ENCODE measurements at regions of chr1 and their contacts with region 1.

Region 1: DNA sequence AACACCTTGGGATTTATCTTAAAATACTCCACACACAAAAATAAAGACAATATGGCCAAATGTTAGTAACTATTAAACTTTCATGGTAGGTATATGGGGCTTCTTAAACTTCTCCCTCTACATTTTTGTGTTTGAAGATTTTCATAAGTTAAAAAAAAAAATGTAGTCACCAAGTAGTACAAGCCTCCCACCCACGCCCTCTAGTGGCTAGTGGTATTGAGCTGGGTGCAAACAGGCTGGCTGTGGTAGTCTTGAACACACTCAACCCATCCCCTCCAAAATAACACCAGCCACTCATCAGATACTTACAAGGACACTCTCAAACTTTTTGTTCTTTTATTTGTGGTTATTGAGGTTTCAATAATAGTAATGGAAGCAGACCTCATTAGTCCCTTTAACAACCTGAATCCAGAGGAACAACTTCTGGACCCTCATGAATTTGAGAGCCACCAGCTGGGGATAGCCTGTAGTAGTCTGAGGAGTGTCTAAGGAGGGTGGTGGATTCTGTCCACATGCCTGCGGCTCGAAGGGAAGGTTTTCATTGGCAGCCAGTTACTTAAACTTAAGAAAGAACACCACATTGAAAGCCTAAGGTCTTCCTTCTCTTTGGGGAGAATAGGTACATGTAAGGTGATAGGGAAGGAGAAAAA is 15.6 kb downstream of the RD3 start:
- DNase-seq: peak; percentile 53 to 87
- ATAC-seq: peak; percentile 87 to 93 (median 89)
- H3K4me3 ChIP-seq: no peak overlapping the region
- H3K4me3 Mint-ChIP-seq: no peak overlapping the region
- H3K27ac ChIP-seq: no peak overlapping the region
- H3K27ac Mint-ChIP-seq: no peak overlapping the region
- H3K4me1 ChIP-seq: no peaks in the 10 kb centered on the region
- H3K4me1 Mint-ChIP-seq: no peaks in the 10 kb centered on the region
- H3K27me3 ChIP-seq: no peaks in the 10 kb centered on the region
- H3K27me3 Mint-ChIP-seq: peaks cover 17 to 23% of the 10 kb centered on the region in 2 donors
- CTCF ChIP-seq: peak; percentile 90

Region 2: GRCh38 chr1:210400043-210400840 is 1076.1 kb before region 1 on chr1:
- intact Hi-C with region 1: loop called (anchors 10 kb)
- DNase-seq: peak in 1 of 2 donors; percentile 64
- ATAC-seq: peak; percentile 36 to 83 (median 64)
- H3K4me3 ChIP-seq: no peak overlapping the region
- H3K4me3 Mint-ChIP-seq: no peak overlapping the region
- H3K27ac ChIP-seq: no peak overlapping the region
- H3K27ac Mint-ChIP-seq: peak overlapping the region in 1 of 2 donors; percentile 21
- H3K4me1 ChIP-seq: no peaks in the 10 kb centered on the region
- H3K4me1 Mint-ChIP-seq: peaks cover 5% of the 10 kb centered on the region in 2 donors
- H3K27me3 ChIP-seq: no peaks in the 10 kb centered on the region
- H3K27me3 Mint-ChIP-seq: no peaks in the 10 kb centered on the region
- CTCF ChIP-seq: peak; percentile 32

Region 3: DNA sequence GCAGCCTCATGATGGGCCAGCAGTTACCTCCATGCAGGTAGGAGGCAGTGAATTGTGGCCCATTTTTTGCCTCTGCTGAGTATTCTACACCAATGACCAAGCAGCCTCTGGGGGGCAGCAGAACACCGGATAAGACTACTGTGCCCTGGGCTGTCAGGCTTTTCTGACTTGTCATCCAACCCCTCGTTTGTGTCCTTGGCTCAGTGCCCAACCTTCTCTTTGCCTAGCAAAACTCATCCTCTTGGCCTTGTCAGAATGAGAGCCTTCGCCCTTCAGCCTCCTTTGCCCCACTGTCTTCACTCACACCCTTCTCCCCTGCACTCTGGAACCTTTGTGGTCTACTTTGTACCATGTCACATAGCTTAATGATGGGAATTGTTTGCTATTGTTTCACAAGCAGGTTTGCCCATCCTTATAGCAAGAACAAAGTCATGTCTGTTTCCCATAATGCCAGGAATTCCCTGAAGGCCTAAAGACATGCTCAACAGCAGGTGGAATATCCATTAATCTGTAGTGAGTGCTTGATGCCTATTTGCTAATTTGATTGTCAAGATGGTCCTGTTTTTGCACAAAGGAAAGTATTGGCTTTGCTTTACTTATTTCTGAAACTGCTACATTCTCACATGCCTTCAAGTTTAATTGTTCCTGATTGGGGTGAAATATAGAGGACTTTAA is 891.7 kb before region 1 on chr1:
- intact Hi-C with region 1: loop called (anchors 2 kb)
- DNase-seq: peak; percentile 23 to 72
- ATAC-seq: peak; percentile 34 to 81 (median 60)
- H3K4me3 ChIP-seq: no peak overlapping the region
- H3K4me3 Mint-ChIP-seq: no peak overlapping the region
- H3K27ac ChIP-seq: no peak overlapping the region
- H3K27ac Mint-ChIP-seq: no peak overlapping the region
- H3K4me1 ChIP-seq: no peaks in the 10 kb centered on the region
- H3K4me1 Mint-ChIP-seq: peaks cover 0 to 12% of the 10 kb centered on the region in 2 donors
- H3K27me3 ChIP-seq: no peaks in the 10 kb centered on the region
- H3K27me3 Mint-ChIP-seq: peaks cover 3% of the 10 kb centered on the region in 2 donors
- CTCF ChIP-seq: no peak

Region 4: DNA sequence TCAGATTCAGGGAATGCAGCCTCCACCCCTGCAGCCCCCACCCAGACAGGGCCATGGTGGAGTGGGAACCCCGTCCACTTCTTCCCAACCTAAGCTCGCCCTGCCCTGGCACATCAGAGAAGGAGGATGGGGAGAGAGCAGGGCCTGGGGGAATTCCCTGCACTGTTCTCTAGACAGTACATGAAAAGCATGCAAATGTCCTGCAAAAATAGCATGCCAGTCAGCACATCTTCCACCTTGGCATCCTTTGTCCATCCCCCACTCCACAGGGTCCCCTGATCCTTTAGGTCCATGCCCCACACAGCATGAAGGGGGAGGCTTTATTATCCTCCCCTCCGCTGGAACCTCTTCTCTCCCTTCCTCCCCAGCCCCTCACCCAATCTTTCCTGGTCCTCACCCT is 50.7 kb after region 1 on chr1:
- intact Hi-C with region 1: no loop called
- DNase-seq: no peak
- ATAC-seq: no peak
- H3K4me3 ChIP-seq: no peak overlapping the region
- H3K4me3 Mint-ChIP-seq: no peak overlapping the region
- H3K27ac ChIP-seq: no peak overlapping the region
- H3K27ac Mint-ChIP-seq: no peak overlapping the region
- H3K4me1 ChIP-seq: peaks cover 4% of the 10 kb centered on the region
- H3K4me1 Mint-ChIP-seq: peaks cover 0 to 4% of the 10 kb centered on the region in 2 donors
- H3K27me3 ChIP-seq: no peaks in the 10 kb centered on the region
- H3K27me3 Mint-ChIP-seq: peaks cover 0 to 11% of the 10 kb centered on the region in 2 donors
- CTCF ChIP-seq: no peak

Measured in natural killer cell (primary cell).